Activated B cell treated with CpG ODN at 0.5 μM for 24 hours (primary cell): ENCODE measurements at regions of chr11 and their contacts with region 1.

Region 1: GRCh38 chr11:47176328-47177228 is at the start of gene ARFGAP2:
- DNase-seq: peak; percentile 92
- ATAC-seq: peak; percentile 93
- H3K4me3 Mint-ChIP-seq: peak within 1 kb of the TSS; percentile 98
- H3K27ac Mint-ChIP-seq: peak within 1 kb of the TSS; percentile 99
- H3K4me1 Mint-ChIP-seq: peaks cover 35% of the 10 kb centered on the region
- H3K27me3 Mint-ChIP-seq: no peaks in the 10 kb centered on the region
- CTCF ChIP-seq: no peak
- total RNA-seq, gene ARFGAP2: 145 and 176 TPM in 2 replicates

Region 2: DNA sequence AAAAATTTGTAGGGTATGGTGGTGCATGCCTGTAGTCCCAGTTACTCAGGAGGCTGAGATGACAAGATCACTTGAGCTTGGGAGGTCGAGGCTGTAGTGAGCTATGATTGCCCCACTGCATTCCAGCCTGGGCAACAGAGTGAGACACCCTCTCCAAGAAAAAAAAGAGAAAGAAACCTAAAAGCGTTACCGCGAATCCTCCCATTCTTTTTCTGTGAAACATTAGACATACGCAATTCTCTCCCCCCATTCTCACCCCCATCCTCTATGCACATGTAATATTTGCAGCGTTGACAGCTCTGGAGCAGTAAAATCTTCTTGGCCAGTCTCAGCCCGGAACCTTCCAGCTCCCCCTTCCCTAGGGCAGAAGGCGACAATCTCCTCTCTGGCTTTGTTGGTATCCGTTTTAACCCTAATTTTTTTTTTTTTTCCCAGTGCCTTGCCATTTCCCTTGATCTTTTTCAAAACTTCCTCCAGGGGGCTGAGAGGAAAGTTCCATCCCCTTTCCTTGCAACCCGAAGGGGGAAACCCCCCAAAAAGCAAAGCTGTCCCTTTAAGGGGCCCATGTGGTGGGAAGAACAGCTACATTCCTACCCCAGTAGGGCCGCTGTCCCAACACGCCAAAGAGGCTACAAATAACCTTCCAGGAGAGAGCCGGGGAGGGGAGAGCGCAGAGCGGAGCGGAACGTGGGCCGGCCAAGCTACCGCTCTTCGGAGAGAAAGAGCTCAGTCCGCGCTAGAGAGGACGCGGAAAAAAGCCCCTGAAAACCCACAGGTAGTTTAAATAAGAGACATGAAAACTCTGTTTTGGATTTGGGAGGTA is 260.1 kb before region 1 on chr11:
- CTCF ChIA-PET with region 1: no interaction called
- POLR2A ChIA-PET with region 1: no interaction called
- intact Hi-C with region 1: no loop called
- DNase-seq: no peak
- ATAC-seq: peak; percentile 19
- H3K4me3 Mint-ChIP-seq: peak overlapping the region; percentile 76
- H3K27ac Mint-ChIP-seq: no peak overlapping the region
- H3K4me1 Mint-ChIP-seq: peaks cover 29% of the 10 kb centered on the region
- H3K27me3 Mint-ChIP-seq: peaks cover 62% of the 10 kb centered on the region
- CTCF ChIP-seq: no peak

Region 3: GRCh38 chr11:47071791-47072261 is 104.8 kb before region 1 on chr11:
- CTCF ChIA-PET with region 1: no interaction called
- POLR2A ChIA-PET with region 1: no interaction called
- intact Hi-C with region 1: no loop called
- DNase-seq: no peak
- ATAC-seq: no peak
- H3K4me3 Mint-ChIP-seq: no peak overlapping the region
- H3K27ac Mint-ChIP-seq: no peak overlapping the region
- H3K4me1 Mint-ChIP-seq: no peaks in the 10 kb centered on the region
- H3K27me3 Mint-ChIP-seq: no peaks in the 10 kb centered on the region
- CTCF ChIP-seq: no peak

Region 4: GRCh38 chr11:47111318-47111804 is 65.2 kb before region 1 on chr11:
- CTCF ChIA-PET with region 1: no interaction called
- POLR2A ChIA-PET with region 1: interaction called, 14 read pairs
- intact Hi-C with region 1: no loop called
- DNase-seq: no peak
- ATAC-seq: peak; percentile 81
- H3K4me3 Mint-ChIP-seq: no peak overlapping the region
- H3K27ac Mint-ChIP-seq: no peak overlapping the region
- H3K4me1 Mint-ChIP-seq: peaks cover 8% of the 10 kb centered on the region
- H3K27me3 Mint-ChIP-seq: peaks cover 2% of the 10 kb centered on the region
- CTCF ChIP-seq: no peak

Region 5: GRCh38 chr11:47147250-47147649 is 29.3 kb before region 1 on chr11:
- CTCF ChIA-PET with region 1: no interaction called
- POLR2A ChIA-PET with region 1: no interaction called
- intact Hi-C with region 1: no loop called
- DNase-seq: no peak
- ATAC-seq: no peak
- H3K4me3 Mint-ChIP-seq: no peak overlapping the region
- H3K27ac Mint-ChIP-seq: no peak overlapping the region
- H3K4me1 Mint-ChIP-seq: peaks cover 9% of the 10 kb centered on the region
- H3K27me3 Mint-ChIP-seq: no peaks in the 10 kb centered on the region
- CTCF ChIP-seq: no peak

Region 6: DNA sequence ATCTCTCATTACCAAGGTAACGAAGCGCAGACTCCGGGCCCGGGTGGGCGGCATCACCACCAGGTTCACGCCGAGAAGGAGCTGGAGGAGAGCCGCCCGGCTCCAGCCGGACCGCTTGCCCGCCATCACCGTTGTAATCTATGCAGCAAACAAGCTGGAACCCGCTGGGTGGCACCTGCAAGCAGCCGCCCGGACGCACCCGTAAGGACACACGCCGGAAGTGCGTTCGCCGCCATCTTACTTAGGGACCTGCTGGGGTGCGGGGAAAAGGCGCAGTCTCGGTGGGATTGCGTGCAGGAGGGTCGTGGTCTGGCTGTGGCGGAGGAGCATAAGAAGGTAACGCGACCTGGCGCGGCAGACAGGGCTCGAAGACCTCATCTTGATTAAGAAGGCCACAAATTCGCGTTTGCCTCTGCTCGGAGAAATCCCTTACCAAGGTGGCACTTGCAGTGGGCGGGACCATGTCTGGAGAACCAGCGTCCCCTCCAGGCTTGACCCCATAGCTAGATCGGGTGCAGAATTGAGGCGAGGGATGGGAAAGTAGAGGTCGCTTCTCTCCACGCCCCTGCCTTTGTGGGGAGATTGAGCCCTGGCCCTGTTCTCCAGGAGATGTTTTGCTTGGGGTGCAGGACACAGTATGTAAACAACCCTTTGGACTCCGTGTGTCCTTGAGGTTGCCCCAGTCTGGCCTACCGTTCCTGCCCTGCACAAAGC is 72.2 kb after region 1 on chr11 and contains the start of gene ACP2:
- CTCF ChIA-PET with region 1: interaction called, 6 read pairs
- POLR2A ChIA-PET with region 1: interaction called, 8 read pairs
- intact Hi-C with region 1: loop called (anchors 1 kb)
- DNase-seq: peak; percentile 82
- ATAC-seq: peak; percentile 96
- H3K4me3 Mint-ChIP-seq: peak within 1 kb of the TSS; percentile 98
- H3K27ac Mint-ChIP-seq: peak within 1 kb of the TSS; percentile 98
- H3K4me1 Mint-ChIP-seq: peaks cover 21% of the 10 kb centered on the region
- H3K27me3 Mint-ChIP-seq: no peaks in the 10 kb centered on the region
- CTCF ChIP-seq: no peak
- total RNA-seq, gene ACP2: 18.7 and 22.5 TPM in 2 replicates

Region 7: GRCh38 chr11:47373876-47374720 is 197.5 kb after region 1 on chr11:
- CTCF ChIA-PET with region 1: no interaction called
- POLR2A ChIA-PET with region 1: no interaction called
- intact Hi-C with region 1: loop called (anchors 1 kb)
- DNase-seq: peak; percentile 81
- ATAC-seq: no peak
- H3K4me3 Mint-ChIP-seq: no peak overlapping the region
- H3K27ac Mint-ChIP-seq: peak overlapping the region; percentile 70
- H3K4me1 Mint-ChIP-seq: peaks cover 54% of the 10 kb centered on the region
- H3K27me3 Mint-ChIP-seq: no peaks in the 10 kb centered on the region
- CTCF ChIP-seq: peak; percentile 83

Region 8: DNA sequence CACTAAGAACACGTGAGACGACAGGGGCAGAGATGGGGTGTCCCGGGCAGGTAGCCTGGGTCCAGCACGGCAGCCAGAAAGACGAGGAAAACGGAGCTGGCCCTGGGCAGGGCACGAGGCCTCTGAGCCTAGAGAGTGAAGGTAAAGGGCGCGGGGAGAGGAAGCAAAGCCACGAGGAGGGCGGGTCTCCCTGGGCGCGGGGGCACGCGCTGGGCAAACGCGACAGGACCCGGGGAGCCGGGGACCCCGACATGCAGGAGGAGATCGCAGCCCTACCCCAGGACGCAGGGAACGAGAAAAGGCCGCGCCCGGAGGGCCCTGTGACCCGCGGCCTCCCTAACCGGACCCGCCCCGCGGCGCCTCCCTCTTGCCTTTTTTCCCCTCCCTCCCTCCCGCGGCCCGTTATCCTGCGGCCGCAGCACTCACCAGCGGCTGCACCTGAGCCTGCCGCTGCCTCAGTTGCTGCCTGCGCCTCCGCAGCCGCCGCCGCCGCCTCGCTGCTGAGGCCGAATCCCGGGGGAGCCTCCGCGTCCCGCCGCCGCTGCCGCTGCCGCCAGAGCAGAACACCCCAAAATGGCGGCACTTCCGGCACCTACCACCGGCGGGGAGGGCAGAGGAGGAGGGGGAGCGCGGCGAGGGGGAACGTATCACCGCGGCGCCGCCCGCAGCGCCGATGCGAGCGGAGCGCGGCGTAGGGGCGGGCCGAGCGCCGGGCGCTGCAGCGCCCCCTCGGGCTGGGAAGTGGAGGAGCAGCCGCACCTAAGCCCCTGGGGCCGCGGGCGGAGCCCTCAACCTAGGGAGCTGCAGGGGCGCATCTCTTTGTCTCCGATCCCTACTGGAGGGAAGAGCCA is 376.2 kb after region 1 on chr11 and contains the start of gene CELF1:
- CTCF ChIA-PET with region 1: no interaction called
- POLR2A ChIA-PET with region 1: no interaction called
- intact Hi-C with region 1: loop called (anchors 2 kb)
- DNase-seq: peak; percentile 93
- ATAC-seq: peak; percentile 94
- H3K4me3 Mint-ChIP-seq: peak within 1 kb of the TSS; percentile 96
- H3K27ac Mint-ChIP-seq: peak within 1 kb of the TSS; percentile 97
- H3K4me1 Mint-ChIP-seq: peaks cover 49% of the 10 kb centered on the region
- H3K27me3 Mint-ChIP-seq: no peaks in the 10 kb centered on the region
- CTCF ChIP-seq: peak; percentile 33
- total RNA-seq, gene CELF1: 129 and 136 TPM in 2 replicates